ENCODE measurements at regions of chr12 and their contacts with region 1.

Region 1: DNA sequence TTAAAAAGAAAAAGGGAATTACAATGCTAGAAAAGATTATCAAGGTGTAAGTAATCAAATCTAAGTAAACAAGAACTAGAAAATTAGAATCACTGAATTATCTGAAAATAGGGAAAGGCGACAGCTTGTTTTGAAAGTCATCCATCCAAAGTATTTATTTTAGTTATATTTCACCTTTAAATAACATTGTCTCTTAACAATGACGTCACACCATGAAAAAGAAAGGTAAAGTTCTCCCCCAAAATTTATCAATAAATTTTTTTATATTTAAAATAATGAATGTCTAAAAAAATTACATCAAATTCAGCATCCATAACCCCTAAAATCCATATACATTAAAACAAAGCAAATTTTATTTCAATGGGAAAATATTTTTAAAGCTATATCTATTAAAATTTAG is 223.2 kb downstream of the RERGL start:
- DNase-seq: no peak
- ATAC-seq: no peak
- H3K4me3 Mint-ChIP-seq: no peak overlapping the region
- H3K27ac Mint-ChIP-seq: no peak overlapping the region
- H3K4me1 Mint-ChIP-seq: no peaks in the 10 kb centered on the region
- H3K27me3 Mint-ChIP-seq: no peaks in the 10 kb centered on the region
- CTCF ChIP-seq: no peak

Region 2: GRCh38 chr12:17489452-17489851 is 377.4 kb before region 1 on chr12:
- CTCF ChIA-PET with region 1: no interaction called
- POLR2A ChIA-PET with region 1: no interaction called
- intact Hi-C with region 1: no loop called
- DNase-seq: no peak
- ATAC-seq: no peak
- H3K4me3 Mint-ChIP-seq: no peak overlapping the region
- H3K27ac Mint-ChIP-seq: no peak overlapping the region
- H3K4me1 Mint-ChIP-seq: no peaks in the 10 kb centered on the region
- H3K27me3 Mint-ChIP-seq: no peaks in the 10 kb centered on the region
- CTCF ChIP-seq: no peak

Region 3: DNA sequence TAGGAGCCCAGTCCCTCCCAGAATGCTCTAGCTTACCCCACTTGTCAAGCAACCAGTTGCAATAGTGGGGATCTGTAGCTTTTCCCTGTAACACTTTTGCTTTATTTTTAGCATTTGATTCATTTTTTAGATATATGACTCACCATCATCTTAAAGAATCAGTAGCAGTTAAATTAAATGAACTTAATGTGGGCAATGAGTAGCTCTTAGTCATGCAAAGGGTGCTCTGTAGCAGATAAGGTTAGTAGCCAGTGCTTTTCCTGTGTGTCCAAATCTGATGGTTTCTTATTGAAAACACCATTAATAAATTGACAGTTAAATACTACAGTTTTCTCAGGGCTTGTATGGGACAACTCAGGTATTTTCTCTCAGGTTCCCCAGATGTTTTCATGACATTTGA is 88.6 kb before region 1 on chr12:
- CTCF ChIA-PET with region 1: no interaction called
- POLR2A ChIA-PET with region 1: no interaction called
- intact Hi-C with region 1: loop called (anchors 5 kb)
- DNase-seq: no peak
- ATAC-seq: no peak
- H3K4me3 Mint-ChIP-seq: no peak overlapping the region
- H3K27ac Mint-ChIP-seq: no peak overlapping the region
- H3K4me1 Mint-ChIP-seq: no peaks in the 10 kb centered on the region
- H3K27me3 Mint-ChIP-seq: no peaks in the 10 kb centered on the region
- CTCF ChIP-seq: no peak

Region 4: GRCh38 chr12:17878716-17879115 is 11.9 kb after region 1 on chr12:
- CTCF ChIA-PET with region 1: no interaction called
- POLR2A ChIA-PET with region 1: no interaction called
- intact Hi-C with region 1: no loop called
- DNase-seq: no peak
- ATAC-seq: no peak
- H3K4me3 Mint-ChIP-seq: no peak overlapping the region
- H3K27ac Mint-ChIP-seq: no peak overlapping the region
- H3K4me1 Mint-ChIP-seq: no peaks in the 10 kb centered on the region
- H3K27me3 Mint-ChIP-seq: no peaks in the 10 kb centered on the region
- CTCF ChIP-seq: no peak

Region 5: GRCh38 chr12:17918013-17918412 is 51.2 kb after region 1 on chr12:
- CTCF ChIA-PET with region 1: no interaction called
- POLR2A ChIA-PET with region 1: no interaction called
- intact Hi-C with region 1: no loop called
- DNase-seq: no peak
- ATAC-seq: no peak
- H3K4me3 Mint-ChIP-seq: no peak overlapping the region
- H3K27ac Mint-ChIP-seq: no peak overlapping the region
- H3K4me1 Mint-ChIP-seq: no peaks in the 10 kb centered on the region
- H3K27me3 Mint-ChIP-seq: no peaks in the 10 kb centered on the region
- CTCF ChIP-seq: no peak

Measured in activated CD8-positive, alpha-beta T cell treated with anti-CD3 and anti-CD28 coated beads for 36 hours (primary cell).